ENCODE measurements at regions of chr7 and their contacts with region 1.

Region 1: DNA sequence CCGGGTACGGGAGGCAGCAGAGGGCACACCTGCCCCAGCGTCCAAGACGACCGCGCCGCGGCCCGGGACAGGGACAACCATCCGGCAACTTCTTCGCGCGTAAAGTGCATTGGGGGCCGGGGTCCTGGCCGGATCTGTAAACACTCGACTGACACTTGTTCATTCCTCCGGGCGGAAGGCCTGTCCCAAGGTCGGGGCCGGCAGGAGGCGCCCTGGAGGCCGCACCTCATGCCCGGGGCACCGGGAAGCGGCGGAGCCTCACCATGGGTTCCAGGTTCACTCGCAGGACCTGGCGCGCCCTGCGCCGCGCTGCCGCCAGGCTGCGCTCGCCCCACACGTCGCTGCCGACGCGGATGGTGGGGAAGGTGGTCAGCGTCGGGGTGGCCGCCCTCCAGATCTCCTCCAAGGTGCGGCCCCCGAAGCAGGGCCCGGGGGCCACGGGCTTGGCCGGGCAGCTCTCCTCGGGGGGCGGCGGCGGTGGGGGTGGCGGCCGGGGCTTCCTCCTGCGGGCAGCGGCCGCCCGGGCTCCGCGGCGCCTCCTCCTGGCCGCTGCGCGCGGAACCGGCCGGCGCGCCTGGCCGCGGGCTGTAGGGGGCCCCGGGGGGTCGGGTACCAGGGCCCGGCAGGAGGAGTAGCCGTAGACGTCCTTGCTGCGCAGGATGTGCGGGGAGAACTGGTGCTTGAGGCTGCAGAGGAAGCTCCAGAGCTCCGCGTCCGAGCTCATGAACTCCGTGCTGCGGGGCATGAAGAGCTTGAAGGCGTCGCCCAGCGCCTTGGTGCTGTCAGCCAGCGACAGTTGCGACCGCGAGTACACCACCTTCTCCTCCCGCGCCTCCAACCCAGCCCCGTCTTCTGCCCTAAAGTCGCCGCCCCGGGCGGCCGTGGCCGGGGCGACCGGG is 746 bp downstream of the CCDC71L start:
- DNase-seq: peak; percentile 78 to 88
- ATAC-seq: peak; percentile 67 to 75 (median 72)
- H3K4me3 ChIP-seq: peak overlapping the region; percentile 87
- H3K27ac ChIP-seq: peak overlapping the region; percentile 82
- H3K4me1 ChIP-seq: peaks cover 2% of the 10 kb centered on the region
- H3K27me3 ChIP-seq: no peaks in the 10 kb centered on the region
- CTCF ChIP-seq: peak; percentile 67

Region 2: DNA sequence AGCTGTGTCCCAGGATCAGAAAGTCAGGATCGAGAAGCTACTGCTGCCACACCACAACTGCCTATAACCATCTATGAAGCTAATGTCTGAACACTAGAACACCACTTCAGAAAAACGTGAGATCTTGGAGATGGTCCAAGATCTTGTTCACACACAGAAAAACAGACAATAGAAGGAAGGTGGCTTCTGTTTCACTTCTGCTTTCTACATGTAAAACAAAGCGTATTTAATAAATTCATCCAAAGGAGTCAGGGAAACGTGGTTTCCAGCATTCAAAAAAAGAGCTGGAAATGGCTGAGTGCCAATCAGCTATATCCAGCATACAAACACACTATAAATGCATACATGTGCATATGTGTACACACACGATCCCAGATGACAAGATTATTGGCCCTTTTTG is 71.0 kb after region 1 on chr7:
- intact Hi-C with region 1: loop called in 1 of 2 experiments (anchors 5 kb)
- DNase-seq: no peak
- ATAC-seq: no peak
- H3K4me3 ChIP-seq: no peak overlapping the region
- H3K27ac ChIP-seq: no peak overlapping the region
- H3K4me1 ChIP-seq: no peaks in the 10 kb centered on the region
- H3K27me3 ChIP-seq: no peaks in the 10 kb centered on the region
- CTCF ChIP-seq: no peak

Region 3: GRCh38 chr7:107007007-107007891 is 347.0 kb after region 1 on chr7:
- intact Hi-C with region 1: no loop called
- DNase-seq: no peak
- ATAC-seq: no peak
- H3K4me3 ChIP-seq: no peak overlapping the region
- H3K27ac ChIP-seq: no peak overlapping the region
- H3K4me1 ChIP-seq: no peaks in the 10 kb centered on the region
- H3K27me3 ChIP-seq: peaks cover 0 to 2% (median 0%) of the 10 kb centered on the region in 3 donors
- CTCF ChIP-seq: no peak

Measured in psoas muscle (tissue), 8 donors.